HEK293 (cell line): ENCODE measurements at regions of chr10 and their contacts with region 1.

Region 1: DNA sequence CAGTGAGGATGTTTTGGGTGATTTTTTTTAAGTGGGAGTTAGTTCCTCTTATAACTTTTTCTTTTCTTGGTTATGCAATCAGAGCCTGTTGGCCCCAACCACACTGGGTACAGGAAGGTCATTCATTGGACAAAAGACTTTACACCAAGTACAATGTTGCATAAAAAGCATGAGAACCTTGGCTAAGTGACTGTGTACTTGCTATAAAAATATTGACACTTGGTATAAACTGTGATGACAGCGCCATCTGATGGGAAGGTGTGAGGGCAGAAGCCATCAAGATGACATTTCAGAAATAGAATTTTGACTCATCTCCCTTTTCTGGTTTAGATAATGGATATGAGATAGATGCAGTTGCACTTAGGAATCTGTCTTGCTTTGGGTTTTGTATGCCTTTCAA is 126.4 kb upstream of the CCDC6 start:
- H3K4me3 ChIP-seq: no peak overlapping the region
- H3K27ac ChIP-seq: no peak overlapping the region
- H3K4me1 ChIP-seq: no peaks in the 10 kb centered on the region
- CTCF ChIP-seq: peak; percentile 40; the same call in 1 of the 2 replicates

Region 2: DNA sequence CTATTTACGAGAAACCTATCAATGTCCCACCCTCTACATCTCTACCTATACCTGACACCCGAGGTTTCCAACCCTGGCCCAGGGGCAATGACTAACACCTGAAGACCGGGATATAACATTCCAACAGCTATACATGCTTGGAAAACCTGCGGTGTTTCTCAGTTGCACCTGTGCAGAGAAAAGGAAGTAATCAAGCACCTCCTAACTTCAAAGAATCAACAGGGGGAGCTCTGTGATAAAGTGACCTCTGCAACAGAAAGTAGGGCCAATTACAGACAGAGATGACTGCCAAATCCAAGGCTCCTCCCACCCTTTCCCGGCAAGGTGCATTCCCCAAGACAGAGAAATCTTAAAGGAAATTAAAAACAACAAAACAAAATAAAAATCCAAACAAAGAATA is 167.6 kb before region 1 on chr10:
- CTCF ChIA-PET with region 1: interaction called, 20 read pairs
- POLR2A ChIA-PET with region 1: interaction called, 3 read pairs
- H3K4me3 ChIP-seq: no peak overlapping the region
- H3K27ac ChIP-seq: no peak overlapping the region
- H3K4me1 ChIP-seq: peaks cover 12% of the 10 kb centered on the region; the same call in 1 of the 2 replicates
- CTCF ChIP-seq: no peak

Region 3: DNA sequence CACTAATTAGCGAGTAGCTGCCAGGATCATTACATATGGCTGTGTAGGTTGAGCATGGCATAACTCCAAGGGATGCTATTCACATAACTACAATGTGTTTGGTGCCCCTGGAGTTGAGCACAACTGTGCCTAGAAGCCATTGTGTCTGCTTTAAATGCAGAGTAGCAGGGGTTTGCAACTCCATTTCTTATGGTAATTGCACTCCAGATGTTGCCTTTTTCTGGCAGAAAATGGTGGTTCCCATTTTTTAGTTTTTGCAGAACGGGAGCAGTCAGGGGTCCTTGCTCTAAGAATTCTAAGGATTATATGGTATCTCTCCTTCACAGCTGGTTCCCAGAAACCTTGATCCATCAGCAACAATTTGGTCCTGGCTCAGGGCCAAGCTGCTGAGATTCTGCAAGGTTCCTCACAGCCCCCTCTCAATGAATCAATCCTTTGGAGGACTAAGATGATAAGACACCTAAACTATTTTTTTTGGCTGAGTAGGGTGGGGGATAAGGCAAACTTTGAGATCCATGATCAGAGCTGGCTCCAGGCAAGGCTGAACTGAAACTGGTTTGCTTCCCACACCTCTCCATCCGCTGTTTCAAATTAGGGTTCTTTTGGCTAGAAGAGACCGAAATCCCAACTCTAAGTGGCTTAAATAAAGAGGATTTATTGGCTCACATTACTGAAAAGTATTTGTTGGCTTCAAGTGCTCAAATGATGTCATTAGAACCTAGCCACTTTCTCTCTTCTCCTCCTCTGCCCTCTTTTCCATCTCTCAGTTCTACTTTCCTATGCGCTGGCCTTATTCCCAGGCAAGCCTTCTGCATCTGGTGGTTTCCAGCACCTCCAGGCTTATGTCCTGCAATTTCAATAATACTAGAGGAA is 28.8 kb before region 1 on chr10:
- CTCF ChIA-PET with region 1: no interaction called
- POLR2A ChIA-PET with region 1: no interaction called
- H3K4me3 ChIP-seq: no peak overlapping the region
- H3K27ac ChIP-seq: no peak overlapping the region
- H3K4me1 ChIP-seq: no peaks in the 10 kb centered on the region
- CTCF ChIP-seq: no peak